ENCODE measurements at regions of chr3 and their contacts with region 1.

Region 1: DNA sequence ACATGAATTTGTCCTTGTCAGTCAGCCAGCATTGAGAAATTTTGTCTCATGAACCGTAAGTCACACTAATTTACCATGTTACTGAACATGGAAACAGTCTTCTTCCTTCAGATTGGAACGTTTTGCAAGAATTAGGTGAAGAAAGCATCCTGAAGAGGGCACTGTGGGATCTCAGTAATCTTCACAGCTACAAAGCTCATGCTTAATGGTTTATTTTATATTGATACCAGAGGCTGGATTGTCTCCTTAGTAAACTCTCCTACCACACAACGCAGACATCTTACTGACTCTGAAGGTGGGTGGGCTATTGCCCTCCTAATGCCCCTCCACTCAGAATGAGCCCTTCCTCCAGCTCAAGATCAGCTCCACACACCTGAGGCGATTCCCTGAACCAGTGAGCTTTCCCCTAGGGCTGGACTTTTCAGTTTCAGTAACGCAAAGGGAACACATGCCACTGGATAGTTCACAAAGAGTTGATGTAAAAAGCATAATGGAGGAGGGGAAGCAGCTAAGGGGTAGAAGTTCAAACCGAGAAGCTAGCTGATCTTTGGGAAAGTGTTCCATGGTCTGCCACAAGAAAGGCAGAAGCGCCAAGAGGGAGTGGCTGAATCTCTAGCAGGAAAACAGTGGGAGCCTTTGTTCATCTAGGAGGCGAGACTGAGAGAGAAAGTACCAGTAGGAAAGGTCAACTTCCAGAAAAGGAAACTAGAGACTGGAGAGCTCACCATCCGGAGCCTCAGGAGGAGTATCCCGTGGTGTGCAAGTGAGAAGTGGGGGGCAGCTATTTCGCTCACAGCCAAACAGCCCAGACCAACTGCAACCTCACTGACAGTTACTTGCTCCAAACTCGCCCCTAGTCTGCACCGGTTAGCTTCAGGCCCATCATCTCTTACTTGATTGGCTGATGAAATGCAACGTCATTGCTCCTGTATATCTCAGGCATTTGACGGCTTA is at the start of gene SLC9C1:
- DNase-seq: no peak
- H3K4me3 ChIP-seq: peak within 1 kb of the TSS; percentile 35 to 71
- H3K27ac ChIP-seq: peak within 1 kb of the TSS; percentile 64 to 85
- H3K4me1 ChIP-seq: no peaks in the 10 kb centered on the region
- H3K27me3 ChIP-seq: no peaks in the 10 kb centered on the region
- CTCF ChIP-seq: peak; percentile 34 to 74 (median 58)
- total RNA-seq, gene SLC9C1: 0.32 TPM

Region 2: GRCh38 chr3:112261742-112262141 is 31.9 kb before region 1 on chr3:
- intact Hi-C with region 1: no loop called
- DNase-seq: no peak
- H3K4me3 ChIP-seq: no peak overlapping the region
- H3K27ac ChIP-seq: no peak overlapping the region
- H3K4me1 ChIP-seq: no peaks in the 10 kb centered on the region
- H3K27me3 ChIP-seq: no peaks in the 10 kb centered on the region
- CTCF ChIP-seq: no peak

Region 3: GRCh38 chr3:112327371-112327951 is 33.8 kb after region 1 on chr3:
- intact Hi-C with region 1: loop called (anchors 5 kb)
- DNase-seq: no peak
- H3K4me3 ChIP-seq: no peak overlapping the region
- H3K27ac ChIP-seq: no peak overlapping the region
- H3K4me1 ChIP-seq: no peaks in the 10 kb centered on the region
- H3K27me3 ChIP-seq: no peaks in the 10 kb centered on the region
- CTCF ChIP-seq: peak; percentile 58 to 80 (median 80)

Region 4: GRCh38 chr3:112519424-112520001 is 225.9 kb after region 1 on chr3:
- intact Hi-C with region 1: loop called (anchors 2 kb)
- DNase-seq: no peak
- H3K4me3 ChIP-seq: no peak overlapping the region
- H3K27ac ChIP-seq: no peak overlapping the region
- H3K4me1 ChIP-seq: no peaks in the 10 kb centered on the region
- H3K27me3 ChIP-seq: no peaks in the 10 kb centered on the region
- CTCF ChIP-seq: peak; percentile 70 to 75 (median 70)

Region 5: GRCh38 chr3:112531358-112531781 is 237.7 kb after region 1 on chr3:
- intact Hi-C with region 1: loop called (anchors 5 kb)
- DNase-seq: no peak
- H3K4me3 ChIP-seq: no peak overlapping the region
- H3K27ac ChIP-seq: no peak overlapping the region
- H3K4me1 ChIP-seq: no peaks in the 10 kb centered on the region
- H3K27me3 ChIP-seq: no peaks in the 10 kb centered on the region
- CTCF ChIP-seq: peak; percentile 28 to 45 (median 37)